HEK293T (cell line): ENCODE measurements at regions of chr12 and their contacts with region 1.

Region 1: DNA sequence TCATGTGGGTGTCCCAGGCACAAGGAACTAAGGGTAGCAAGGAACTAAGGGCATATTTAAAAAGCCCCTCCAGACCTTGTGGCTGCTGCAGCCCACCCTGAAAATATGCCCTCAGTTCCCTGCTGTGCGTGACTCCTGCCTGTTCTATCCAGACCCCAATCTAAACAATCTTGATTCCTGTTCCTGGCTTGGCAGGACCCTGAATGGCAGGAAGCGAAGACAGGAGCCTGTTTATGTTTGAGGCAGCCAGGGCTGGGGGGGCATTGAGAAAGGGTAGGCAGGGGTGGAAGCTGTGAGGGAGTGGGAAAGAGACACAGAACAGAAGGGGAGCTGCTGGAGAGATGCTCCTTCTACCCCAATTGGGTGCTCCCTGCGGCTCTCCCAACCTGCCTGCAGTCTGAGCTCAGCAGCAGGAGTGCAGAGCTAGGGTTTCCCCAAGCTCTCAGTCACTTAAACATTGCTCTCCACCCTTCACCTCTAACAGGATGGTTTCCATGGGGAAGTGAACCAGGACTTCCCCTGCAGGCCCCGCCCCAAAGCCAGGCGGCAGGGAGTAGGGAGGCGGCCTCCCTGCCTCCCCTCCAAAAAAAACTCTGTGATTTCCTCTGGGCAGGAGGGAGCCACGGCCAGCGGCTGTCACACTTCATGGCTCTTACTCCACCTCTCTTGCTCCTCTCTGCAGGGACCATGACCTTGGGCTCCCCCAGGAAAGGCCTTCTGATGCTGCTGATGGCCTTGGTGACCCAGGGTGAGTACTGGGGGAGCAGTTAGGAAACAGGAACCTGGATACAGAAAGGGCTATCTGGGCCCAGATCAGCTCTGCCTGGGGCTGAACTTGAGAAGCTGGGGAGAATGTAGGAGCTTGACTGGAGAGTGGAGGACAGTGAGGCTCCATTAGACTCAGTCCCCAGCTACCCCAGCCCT is 4.7 kb downstream of the ACVRL1 start:
- DNase-seq: peak; percentile 31

Region 2: DNA sequence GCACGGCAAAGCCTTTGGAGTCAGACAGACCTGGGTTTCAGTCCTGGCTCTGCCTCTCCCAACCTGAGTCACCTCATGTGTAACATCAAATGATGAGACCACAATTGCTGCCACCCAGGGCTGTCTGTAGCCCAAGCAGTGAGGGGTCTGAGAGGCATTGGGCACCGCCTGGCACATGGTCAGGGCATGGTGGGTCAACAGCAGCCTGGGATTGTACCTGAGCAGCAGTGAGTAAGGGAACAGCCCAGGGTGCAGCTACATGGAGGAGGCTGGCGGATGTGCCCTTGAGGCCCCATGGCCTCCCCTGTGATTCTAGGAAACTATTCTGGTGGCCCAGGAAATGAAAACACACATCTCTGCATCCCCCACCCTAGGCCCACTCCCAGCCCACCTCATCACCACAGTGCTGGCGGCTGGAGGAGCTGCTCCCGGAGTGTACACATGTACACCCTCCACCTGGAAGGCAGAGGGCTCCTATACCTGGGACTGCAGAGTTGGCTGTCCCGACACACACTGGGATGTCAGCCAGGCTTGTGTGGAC is 16.5 kb before region 1 on chr12:
- CTCF ChIA-PET with region 1: interaction called, 13 read pairs
- POLR2A ChIA-PET with region 1: no interaction called
- DNase-seq: no peak

Region 3: GRCh38 chr12:51923501-51924271 is 11.6 kb after region 1 on chr12:
- CTCF ChIA-PET with region 1: interaction called, 31 read pairs
- POLR2A ChIA-PET with region 1: no interaction called
- DNase-seq: peak; percentile 80

Region 4: GRCh38 chr12:52203075-52203921 is 291.2 kb after region 1 on chr12:
- CTCF ChIA-PET with region 1: no interaction called
- POLR2A ChIA-PET with region 1: no interaction called
- DNase-seq: no peak